ENCODE measurements at regions of chr5 and their contacts with region 1.

Region 1: GRCh38 chr5:87780831-87781760 is 368.4 kb upstream of the CCNH start:
- DNase-seq: peak; percentile 48
- ATAC-seq: peak; percentile 100
- H3K4me3 ChIP-seq: no peak overlapping the region
- H3K27ac ChIP-seq: no peak overlapping the region
- H3K4me1 ChIP-seq: no peaks in the 10 kb centered on the region
- H3K27me3 ChIP-seq: no peaks in the 10 kb centered on the region
- CTCF ChIP-seq: peak; percentile 89 to 95 (median 91); a peak in 5 of 6 replicates
- EP300 ChIP-seq: no peak
- POLR2A ChIP-seq: no peak
- RAD21 ChIP-seq: peak; percentile 95

Region 2: GRCh38 chr5:87229780-87230179 is 551.3 kb before region 1 on chr5:
- CTCF ChIA-PET with region 1: no interaction called
- POLR2A ChIA-PET with region 1: no interaction called
- RAD21 ChIA-PET with region 1: no interaction called
- SMC1A ChIA-PET with region 1: no interaction called
- in situ Hi-C with region 1: no loop called
- intact Hi-C with region 1: no loop called
- DNase-seq: no peak
- ATAC-seq: no peak
- H3K4me3 ChIP-seq: no peak overlapping the region
- H3K27ac ChIP-seq: peak overlapping the region; percentile 49
- H3K4me1 ChIP-seq: peaks cover 21% of the 10 kb centered on the region
- H3K27me3 ChIP-seq: no peaks in the 10 kb centered on the region
- CTCF ChIP-seq: no peak
- EP300 ChIP-seq: no peak
- POLR2A ChIP-seq: no peak
- RAD21 ChIP-seq: no peak

Region 3: DNA sequence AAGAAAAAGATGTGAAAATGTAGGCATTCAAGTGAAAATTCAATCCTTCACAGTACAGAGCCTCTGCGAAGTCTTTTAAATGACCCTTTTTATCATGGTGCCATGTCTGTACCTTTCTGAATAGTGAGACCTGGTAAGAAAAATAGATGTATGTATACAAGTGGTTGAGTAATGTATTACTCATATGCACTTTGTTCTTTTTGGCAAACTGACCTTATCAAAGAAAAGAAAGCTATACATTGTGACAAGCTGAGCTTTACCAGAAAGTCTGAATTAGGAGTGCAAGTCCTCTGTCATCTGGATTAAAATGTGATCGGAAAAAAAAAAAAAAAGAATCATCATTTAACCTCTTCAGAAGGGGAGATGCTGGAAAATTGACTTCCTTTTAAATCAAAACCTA is 11.9 kb before region 1 on chr5:
- CTCF ChIA-PET with region 1: interaction called, 31 read pairs
- POLR2A ChIA-PET with region 1: no interaction called
- RAD21 ChIA-PET with region 1: interaction called, 4 read pairs
- SMC1A ChIA-PET with region 1: interaction called, 3 read pairs
- in situ Hi-C with region 1: no loop called
- intact Hi-C with region 1: no loop called
- DNase-seq: no peak
- ATAC-seq: no peak
- H3K4me3 ChIP-seq: no peak overlapping the region
- H3K27ac ChIP-seq: no peak overlapping the region
- H3K4me1 ChIP-seq: no peaks in the 10 kb centered on the region
- H3K27me3 ChIP-seq: no peaks in the 10 kb centered on the region; a peak in 1 of 4 replicates
- CTCF ChIP-seq: no peak
- EP300 ChIP-seq: no peak
- POLR2A ChIP-seq: no peak
- RAD21 ChIP-seq: no peak

Region 4: DNA sequence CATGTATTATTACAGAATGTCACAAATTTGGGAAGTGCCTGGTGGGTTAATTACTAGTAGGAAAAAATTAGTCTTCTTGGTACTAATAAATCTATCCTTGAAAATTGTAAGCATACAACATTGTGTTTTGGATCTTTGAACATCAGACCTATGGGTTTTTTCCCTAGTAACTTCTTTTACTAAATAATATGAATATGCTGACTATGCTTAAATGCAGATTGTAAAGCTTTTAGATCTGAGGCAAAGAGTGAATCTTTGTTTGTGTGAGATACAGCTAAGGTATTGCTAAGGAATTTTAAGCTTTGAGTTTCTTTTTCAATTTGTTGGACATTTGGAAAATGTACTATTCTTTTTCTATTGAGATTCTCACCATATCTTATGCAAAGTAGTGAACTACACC is 22.3 kb after region 1 on chr5:
- CTCF ChIA-PET with region 1: interaction called, 15 read pairs
- POLR2A ChIA-PET with region 1: no interaction called
- RAD21 ChIA-PET with region 1: interaction called, 3 read pairs
- SMC1A ChIA-PET with region 1: interaction called, 5 read pairs
- in situ Hi-C with region 1: no loop called
- intact Hi-C with region 1: no loop called
- DNase-seq: no peak
- ATAC-seq: no peak
- H3K4me3 ChIP-seq: no peak overlapping the region
- H3K27ac ChIP-seq: no peak overlapping the region
- H3K4me1 ChIP-seq: no peaks in the 10 kb centered on the region
- H3K27me3 ChIP-seq: no peaks in the 10 kb centered on the region; a peak in 1 of 4 replicates
- CTCF ChIP-seq: no peak
- EP300 ChIP-seq: no peak
- POLR2A ChIP-seq: no peak
- RAD21 ChIP-seq: no peak

Region 5: DNA sequence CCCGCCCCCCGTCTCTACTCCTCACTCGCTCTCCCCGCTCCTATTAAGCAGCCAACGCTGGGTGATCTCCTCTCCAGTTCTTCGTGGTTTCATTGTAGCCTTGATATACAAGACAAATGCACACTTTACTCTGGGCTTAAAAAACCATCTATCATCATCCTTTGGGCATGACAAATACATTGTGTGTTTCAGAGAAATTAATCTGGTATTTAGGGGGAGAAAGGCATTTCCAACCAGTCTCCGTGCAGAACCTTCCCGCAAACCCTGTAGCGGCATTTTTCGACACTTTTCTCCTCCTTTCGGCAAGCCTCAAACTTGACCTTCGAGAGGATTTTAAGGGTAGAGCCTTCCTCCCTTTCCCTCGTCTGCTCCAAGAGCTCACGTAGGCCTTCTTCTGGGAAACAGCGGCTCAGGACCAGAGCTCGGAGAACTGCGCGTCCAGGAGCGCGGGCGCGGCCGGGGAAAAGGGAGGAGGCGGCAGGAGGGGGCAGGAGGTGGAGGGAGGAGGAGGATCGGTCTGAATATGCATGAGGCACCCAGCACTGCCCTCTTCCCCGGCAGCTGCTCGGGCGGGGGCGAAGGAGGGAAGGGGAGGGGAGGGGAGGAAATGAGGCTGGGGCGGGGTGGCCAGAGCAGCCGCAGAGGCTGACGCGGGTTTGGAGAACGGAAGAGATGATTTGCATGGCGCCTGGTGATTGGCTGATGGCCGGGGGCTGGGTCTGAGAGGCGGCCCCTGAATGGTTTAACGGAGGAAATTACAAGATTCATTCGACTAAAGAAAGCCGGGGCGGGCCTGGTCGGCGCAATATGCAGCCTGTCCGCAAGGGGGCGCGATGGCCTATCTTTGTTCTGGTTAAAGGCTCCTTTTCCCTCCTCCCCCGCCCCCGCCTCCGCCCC is 360.0 kb after region 1 on chr5:
- CTCF ChIA-PET with region 1: interaction called, 5 read pairs
- POLR2A ChIA-PET with region 1: no interaction called
- RAD21 ChIA-PET with region 1: no interaction called
- SMC1A ChIA-PET with region 1: interaction called, 4 read pairs
- in situ Hi-C with region 1: no loop called
- intact Hi-C with region 1: loop called (anchors 5 kb)
- DNase-seq: peak; percentile 8
- ATAC-seq: peak; percentile 91
- H3K4me3 ChIP-seq: no peak overlapping the region
- H3K27ac ChIP-seq: no peak overlapping the region
- H3K4me1 ChIP-seq: no peaks in the 10 kb centered on the region
- H3K27me3 ChIP-seq: peaks cover 11 to 29% of the 10 kb centered on the region in 2 experiments
- CTCF ChIP-seq: peak; percentile 24 to 59 (median 58); a peak in 4 of 6 replicates
- EP300 ChIP-seq: no peak
- POLR2A ChIP-seq: no peak
- RAD21 ChIP-seq: peak; percentile 47; the same call in 1 of the 2 replicates

Region 6: GRCh38 chr5:88602584-88602983 is 821.5 kb after region 1 on chr5:
- CTCF ChIA-PET with region 1: no interaction called
- POLR2A ChIA-PET with region 1: no interaction called
- RAD21 ChIA-PET with region 1: no interaction called
- SMC1A ChIA-PET with region 1: no interaction called
- in situ Hi-C with region 1: no loop called
- intact Hi-C with region 1: loop called (anchors 5 kb)
- DNase-seq: no peak
- ATAC-seq: peak; percentile 53; the same call in 2 of the 3 replicates
- H3K4me3 ChIP-seq: no peak overlapping the region
- H3K27ac ChIP-seq: no peak overlapping the region
- H3K4me1 ChIP-seq: no peaks in the 10 kb centered on the region
- H3K27me3 ChIP-seq: no peaks in the 10 kb centered on the region
- CTCF ChIP-seq: peak; percentile 28 to 57 (median 49); a peak in 4 of 6 replicates
- EP300 ChIP-seq: no peak
- POLR2A ChIP-seq: no peak
- RAD21 ChIP-seq: no peak

Region 7: GRCh38 chr5:88690409-88691229 is 909.5 kb after region 1 on chr5:
- CTCF ChIA-PET with region 1: interaction called, 78 read pairs
- POLR2A ChIA-PET with region 1: no interaction called
- RAD21 ChIA-PET with region 1: interaction called, 48 read pairs
- SMC1A ChIA-PET with region 1: interaction called, 40 read pairs
- in situ Hi-C with region 1: loop called (anchors 5 kb)
- intact Hi-C with region 1: loop called (anchors 1 kb)
- DNase-seq: no peak
- ATAC-seq: peak; percentile 93
- H3K4me3 ChIP-seq: peak overlapping the region; percentile 20; the same call in 1 of the 2 replicates
- H3K27ac ChIP-seq: no peak overlapping the region
- H3K4me1 ChIP-seq: no peaks in the 10 kb centered on the region; the same call in 1 of the 2 replicates
- H3K27me3 ChIP-seq: peaks cover 27 to 40% of the 10 kb centered on the region in 2 experiments
- CTCF ChIP-seq: peak; percentile 96 to 98 (median 97)
- EP300 ChIP-seq: no peak
- POLR2A ChIP-seq: no peak
- RAD21 ChIP-seq: peak; percentile 84

Region 8: DNA sequence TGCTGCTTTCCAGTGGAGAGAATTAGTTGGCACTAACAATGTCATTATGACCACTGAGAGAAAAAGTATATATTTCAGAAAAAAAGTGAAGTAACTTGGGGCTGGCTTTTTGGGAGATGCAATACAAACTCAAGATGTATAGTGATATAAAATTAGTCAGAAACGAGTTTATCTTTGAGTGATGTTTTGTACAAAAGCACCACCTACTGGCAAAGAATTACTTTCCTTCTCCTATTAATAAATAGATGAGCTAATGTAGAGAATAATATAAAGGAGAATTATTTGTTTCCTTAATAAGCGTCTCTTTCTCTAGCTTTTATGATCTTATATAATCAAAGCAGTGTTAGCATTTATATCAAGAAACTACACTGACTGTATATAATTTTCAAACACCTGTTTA is 943.1 kb after region 1 on chr5:
- CTCF ChIA-PET with region 1: interaction called, 10 read pairs
- POLR2A ChIA-PET with region 1: no interaction called
- RAD21 ChIA-PET with region 1: interaction called, 12 read pairs
- SMC1A ChIA-PET with region 1: interaction called, 3 read pairs
- in situ Hi-C with region 1: no loop called
- intact Hi-C with region 1: no loop called
- DNase-seq: no peak
- ATAC-seq: peak; percentile 34; the same call in 2 of the 3 replicates
- H3K4me3 ChIP-seq: no peak overlapping the region
- H3K27ac ChIP-seq: no peak overlapping the region
- H3K4me1 ChIP-seq: no peaks in the 10 kb centered on the region
- H3K27me3 ChIP-seq: no peaks in the 10 kb centered on the region
- CTCF ChIP-seq: peak in 1 of 3 experiments; percentile 13; a peak in 2 of 6 replicates
- EP300 ChIP-seq: no peak
- POLR2A ChIP-seq: no peak
- RAD21 ChIP-seq: no peak

Measured in GM12878 (cell line).